K562 (cell line): ENCODE measurements at regions of chr12 and their contacts with region 1.

Region 1: GRCh38 chr12:93766796-93767523 is 89.8 kb downstream of the CRADD start:
- DNase-seq: peak in 1 of 4 experiments; percentile 61
- ATAC-seq: peak; percentile 62
- H3K4me3 ChIP-seq: no peak overlapping the region
- H3K27ac ChIP-seq: no peak overlapping the region
- H3K4me1 ChIP-seq: peaks cover 4 to 28% of the 10 kb centered on the region in 2 experiments; a peak in 4 of 5 replicates
- H3K27me3 ChIP-seq: no peaks in the 10 kb centered on the region
- CTCF ChIP-seq: peak; percentile 51 to 78 (median 61); a peak in 5 of 6 replicates
- EP300 ChIP-seq: no peak
- POLR2A ChIP-seq: no peak
- RAD21 ChIP-seq: peak; percentile 90 to 93

Region 2: GRCh38 chr12:92987362-92987761 is 779.6 kb before region 1 on chr12:
- CTCF ChIA-PET with region 1: no interaction called
- POLR2A ChIA-PET with region 1: no interaction called
- in situ Hi-C with region 1: no loop called
- intact Hi-C with region 1: loop called (anchors 10 kb)
- DNase-seq: peak; percentile 48 to 76 (median 56)
- ATAC-seq: peak; percentile 91
- H3K4me3 ChIP-seq: no peak overlapping the region
- H3K27ac ChIP-seq: no peak overlapping the region
- H3K4me1 ChIP-seq: peaks cover 0 to 12% of the 10 kb centered on the region in 2 experiments; a peak in 1 of 5 replicates
- H3K27me3 ChIP-seq: no peaks in the 10 kb centered on the region
- CTCF ChIP-seq: peak; percentile 42 to 80 (median 47); a peak in 4 of 6 replicates
- EP300 ChIP-seq: no peak
- POLR2A ChIP-seq: no peak
- RAD21 ChIP-seq: peak; percentile 85 to 88

Region 3: GRCh38 chr12:93526786-93527428 is 240.1 kb before region 1 on chr12:
- CTCF ChIA-PET with region 1: no interaction called
- POLR2A ChIA-PET with region 1: no interaction called
- in situ Hi-C with region 1: no loop called
- intact Hi-C with region 1: loop called (anchors 2 kb)
- DNase-seq: peak in 1 of 4 experiments; percentile 23
- ATAC-seq: no peak
- H3K4me3 ChIP-seq: no peak overlapping the region
- H3K27ac ChIP-seq: no peak overlapping the region
- H3K4me1 ChIP-seq: peaks cover 0 to 6% of the 10 kb centered on the region in 2 experiments; a peak in 2 of 5 replicates
- H3K27me3 ChIP-seq: no peaks in the 10 kb centered on the region
- CTCF ChIP-seq: no peak
- EP300 ChIP-seq: no peak
- POLR2A ChIP-seq: no peak
- RAD21 ChIP-seq: no peak

Region 4: GRCh38 chr12:93742110-93742934 is 24.6 kb before region 1 on chr12:
- CTCF ChIA-PET with region 1: no interaction called
- POLR2A ChIA-PET with region 1: interaction called, 7 read pairs
- in situ Hi-C with region 1: no loop called
- intact Hi-C with region 1: loop called (anchors 1 kb)
- DNase-seq: peak; percentile 86 to 96 (median 90)
- ATAC-seq: peak; percentile 88
- H3K4me3 ChIP-seq: peak overlapping the region; percentile 44
- H3K27ac ChIP-seq: peak overlapping the region; percentile 91
- H3K4me1 ChIP-seq: peaks cover 11 to 56% of the 10 kb centered on the region in 2 experiments
- H3K27me3 ChIP-seq: no peaks in the 10 kb centered on the region
- CTCF ChIP-seq: peak; percentile 55 to 82 (median 65); a peak in 5 of 6 replicates
- EP300 ChIP-seq: peak; percentile 95
- POLR2A ChIP-seq: peak; percentile 29; the same call in 1 of the 2 replicates
- RAD21 ChIP-seq: peak; percentile 51 to 88

Region 5: DNA sequence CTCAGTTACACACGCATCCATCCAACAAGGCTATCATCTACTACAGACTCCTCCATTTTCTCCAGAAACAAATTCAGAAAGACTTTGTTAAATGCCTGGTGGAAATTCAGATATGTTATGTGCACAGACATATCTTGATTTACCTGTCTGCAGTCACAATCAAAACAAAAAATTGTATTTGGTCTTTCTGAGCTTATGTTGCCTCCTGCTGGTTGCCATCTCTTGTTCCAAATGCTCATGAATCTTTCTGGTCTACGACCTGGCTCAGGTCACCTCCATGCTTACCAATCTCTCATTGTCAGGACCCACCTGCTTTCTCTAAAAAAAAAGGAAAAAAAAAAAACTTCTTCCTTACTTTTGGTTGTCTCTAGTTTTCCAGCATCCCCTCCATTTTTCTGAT is 212.2 kb after region 1 on chr12:
- CTCF ChIA-PET with region 1: interaction called, 3 read pairs
- POLR2A ChIA-PET with region 1: no interaction called
- in situ Hi-C with region 1: no loop called
- intact Hi-C with region 1: loop called (anchors 1 kb)
- DNase-seq: peak in 1 of 4 experiments; percentile 50
- ATAC-seq: peak; percentile 56
- H3K4me3 ChIP-seq: no peak overlapping the region
- H3K27ac ChIP-seq: no peak overlapping the region
- H3K4me1 ChIP-seq: peaks cover 0 to 12% of the 10 kb centered on the region in 2 experiments; a peak in 3 of 5 replicates
- H3K27me3 ChIP-seq: no peaks in the 10 kb centered on the region
- CTCF ChIP-seq: peak; percentile 42 to 73 (median 55); a peak in 4 of 6 replicates
- EP300 ChIP-seq: no peak
- POLR2A ChIP-seq: no peak
- RAD21 ChIP-seq: peak; percentile 79 to 94